ENCODE measurements at regions of chr1 and their contacts with region 1.

Region 1: DNA sequence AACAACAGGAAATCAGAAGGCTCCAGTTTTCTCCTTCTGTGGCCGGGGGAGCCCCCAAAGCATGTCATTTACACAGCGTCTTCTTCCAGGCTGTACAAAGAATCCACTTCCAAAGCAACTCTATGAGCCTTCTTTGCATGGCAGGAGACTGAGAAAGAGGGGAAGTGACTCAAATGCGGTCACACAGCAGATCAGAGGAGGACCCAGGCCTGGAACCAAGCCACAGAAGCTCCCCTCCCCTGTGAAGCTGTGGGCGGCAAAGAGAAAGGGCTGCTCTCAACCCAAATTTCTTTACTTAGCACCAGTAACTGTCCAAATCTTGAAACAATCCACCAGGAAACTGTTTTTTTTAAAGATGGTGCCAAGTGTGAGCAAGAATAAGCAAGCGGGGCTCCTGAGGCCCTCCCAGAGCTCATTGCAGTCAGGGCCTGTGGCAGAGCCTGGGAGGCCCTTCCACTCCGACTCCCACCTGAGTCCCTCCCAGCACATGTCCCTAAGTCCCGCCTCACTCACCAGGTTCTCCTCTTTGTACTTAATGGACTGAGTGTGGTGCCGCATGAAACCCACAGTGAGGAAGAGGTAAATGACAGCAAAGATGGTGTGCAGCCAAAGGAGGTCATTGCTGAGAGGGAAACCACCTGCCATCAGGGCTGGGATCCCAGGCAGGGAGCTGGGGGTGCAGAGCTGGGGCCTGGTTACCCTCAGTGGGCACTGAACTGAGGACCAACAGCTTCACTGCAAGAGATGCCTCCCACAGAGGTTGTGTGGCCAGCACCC is 15.9 kb downstream of the TMEM63A start:
- DNase-seq: peak; percentile 89
- H3K4me3 Mint-ChIP-seq: peak overlapping the region; percentile 66
- H3K27ac Mint-ChIP-seq: peak overlapping the region; percentile 74
- H3K4me1 Mint-ChIP-seq: peaks cover 31% of the 10 kb centered on the region
- H3K27me3 Mint-ChIP-seq: no peaks in the 10 kb centered on the region

Region 2: DNA sequence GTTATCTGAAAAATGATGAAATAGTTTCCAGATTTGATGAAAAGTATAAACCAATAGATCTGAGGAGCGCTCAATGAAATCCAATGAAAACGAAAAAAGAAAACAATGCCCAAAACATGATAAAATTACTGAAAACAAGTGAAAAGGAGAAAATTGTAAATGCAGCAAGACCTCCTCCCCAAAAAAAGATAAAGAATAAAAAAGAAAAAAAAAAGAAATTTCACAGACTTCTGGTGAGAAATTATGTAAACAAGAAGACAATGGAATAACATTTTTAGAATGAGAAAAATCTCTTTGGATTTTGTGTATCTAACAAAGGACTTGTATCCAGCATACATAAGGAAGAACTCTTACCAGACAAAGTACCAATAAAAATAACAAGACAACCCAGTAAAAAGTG is 802.5 kb before region 1 on chr1:
- intact Hi-C with region 1: no loop called
- DNase-seq: no peak
- H3K4me3 Mint-ChIP-seq: no peak overlapping the region
- H3K27ac Mint-ChIP-seq: no peak overlapping the region
- H3K4me1 Mint-ChIP-seq: no peaks in the 10 kb centered on the region
- H3K27me3 Mint-ChIP-seq: no peaks in the 10 kb centered on the region

Region 3: GRCh38 chr1:225809842-225810578 is 56.2 kb before region 1 on chr1 and contains the start of gene EPHX1:
- intact Hi-C with region 1: loop called (anchors 5 kb)
- DNase-seq: peak; percentile 94
- H3K4me3 Mint-ChIP-seq: peak within 1 kb of the TSS; percentile 90
- H3K27ac Mint-ChIP-seq: peak within 1 kb of the TSS; percentile 67
- H3K4me1 Mint-ChIP-seq: peaks cover 8% of the 10 kb centered on the region
- H3K27me3 Mint-ChIP-seq: peaks cover 22% of the 10 kb centered on the region
- total RNA-seq, gene EPHX1: 1.6 and 1.8 TPM in 2 replicates

Region 4: GRCh38 chr1:225855503-225856300 is 10.5 kb before region 1 on chr1:
- intact Hi-C with region 1: loop called (anchors 1 kb)
- DNase-seq: no peak
- H3K4me3 Mint-ChIP-seq: no peak overlapping the region
- H3K27ac Mint-ChIP-seq: no peak overlapping the region
- H3K4me1 Mint-ChIP-seq: peaks cover 8% of the 10 kb centered on the region
- H3K27me3 Mint-ChIP-seq: no peaks in the 10 kb centered on the region

Region 5: DNA sequence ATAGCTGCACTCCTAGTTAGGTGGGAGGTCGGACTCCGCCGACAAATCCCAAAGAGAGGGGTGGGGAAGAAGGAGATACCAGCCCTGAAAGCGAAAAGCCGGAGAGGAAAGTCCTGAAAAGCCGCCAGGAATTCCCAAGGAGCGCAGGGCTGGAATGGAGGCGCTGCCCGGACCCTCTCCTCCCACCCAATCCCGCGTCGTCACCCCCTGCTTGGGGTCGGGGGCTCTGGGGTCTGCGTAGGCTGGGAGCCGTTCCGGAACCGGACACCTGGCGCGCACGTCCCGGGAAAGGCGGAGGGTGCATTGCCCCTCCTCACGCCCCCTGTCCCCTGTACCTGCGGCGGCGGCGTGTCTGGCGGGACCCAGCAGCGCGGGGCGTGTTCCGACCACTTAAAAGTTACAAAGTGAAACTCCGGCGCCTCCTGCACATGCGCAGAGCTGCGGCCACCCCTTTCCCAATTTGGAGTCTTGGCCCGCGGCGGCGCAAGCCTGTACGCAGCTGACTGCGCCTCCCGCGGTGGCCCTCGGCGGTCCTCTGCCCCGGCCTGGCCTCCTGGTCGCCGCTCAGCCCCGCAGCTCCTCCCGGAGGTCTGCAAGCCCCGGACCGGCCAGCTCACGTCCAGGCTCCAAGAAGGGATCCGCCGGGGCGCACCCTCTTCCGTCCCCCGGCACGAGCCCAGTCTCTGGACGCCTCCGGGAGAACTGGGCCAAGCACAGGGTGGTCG is 15.9 kb after region 1 on chr1 and contains the start of gene TMEM63A:
- intact Hi-C with region 1: loop called (anchors 1 kb)
- DNase-seq: peak; percentile 97
- H3K4me3 Mint-ChIP-seq: peak within 1 kb of the TSS; percentile 85
- H3K27ac Mint-ChIP-seq: peak within 1 kb of the TSS; percentile 87
- H3K4me1 Mint-ChIP-seq: peaks cover 43% of the 10 kb centered on the region
- H3K27me3 Mint-ChIP-seq: peaks cover 14% of the 10 kb centered on the region
- total RNA-seq, gene TMEM63A: 23.0 and 28.5 TPM in 2 replicates

Region 6: GRCh38 chr1:225896937-225897549 is 30.8 kb after region 1 on chr1:
- intact Hi-C with region 1: loop called (anchors 1 kb)
- DNase-seq: peak; percentile 95
- H3K4me3 Mint-ChIP-seq: peak overlapping the region; percentile 75
- H3K27ac Mint-ChIP-seq: peak overlapping the region; percentile 84
- H3K4me1 Mint-ChIP-seq: peaks cover 39% of the 10 kb centered on the region
- H3K27me3 Mint-ChIP-seq: peaks cover 17% of the 10 kb centered on the region

Region 7: GRCh38 chr1:225923692-225924555 is 57.7 kb after region 1 on chr1 and contains the start of gene PYCR2:
- intact Hi-C with region 1: loop called (anchors 2 kb)
- DNase-seq: peak; percentile 99
- H3K4me3 Mint-ChIP-seq: peak within 1 kb of the TSS; percentile 97
- H3K27ac Mint-ChIP-seq: peak within 1 kb of the TSS; percentile 95
- H3K4me1 Mint-ChIP-seq: peaks cover 39% of the 10 kb centered on the region
- H3K27me3 Mint-ChIP-seq: no peaks in the 10 kb centered on the region
- total RNA-seq, gene PYCR2: 144 and 150 TPM in 2 replicates